ENCODE measurements at regions of chr14 and their contacts with region 1.

Region 1: GRCh38 chr14:54411371-54411770 is 14.6 kb downstream of the CDKN3 start:
- DNase-seq: no peak
- H3K4me3 ChIP-seq: no peak overlapping the region
- H3K27ac ChIP-seq: no peak overlapping the region
- H3K4me1 ChIP-seq: no peaks in the 10 kb centered on the region
- H3K27me3 ChIP-seq: no peaks in the 10 kb centered on the region
- CTCF ChIP-seq: no peak

Region 2: DNA sequence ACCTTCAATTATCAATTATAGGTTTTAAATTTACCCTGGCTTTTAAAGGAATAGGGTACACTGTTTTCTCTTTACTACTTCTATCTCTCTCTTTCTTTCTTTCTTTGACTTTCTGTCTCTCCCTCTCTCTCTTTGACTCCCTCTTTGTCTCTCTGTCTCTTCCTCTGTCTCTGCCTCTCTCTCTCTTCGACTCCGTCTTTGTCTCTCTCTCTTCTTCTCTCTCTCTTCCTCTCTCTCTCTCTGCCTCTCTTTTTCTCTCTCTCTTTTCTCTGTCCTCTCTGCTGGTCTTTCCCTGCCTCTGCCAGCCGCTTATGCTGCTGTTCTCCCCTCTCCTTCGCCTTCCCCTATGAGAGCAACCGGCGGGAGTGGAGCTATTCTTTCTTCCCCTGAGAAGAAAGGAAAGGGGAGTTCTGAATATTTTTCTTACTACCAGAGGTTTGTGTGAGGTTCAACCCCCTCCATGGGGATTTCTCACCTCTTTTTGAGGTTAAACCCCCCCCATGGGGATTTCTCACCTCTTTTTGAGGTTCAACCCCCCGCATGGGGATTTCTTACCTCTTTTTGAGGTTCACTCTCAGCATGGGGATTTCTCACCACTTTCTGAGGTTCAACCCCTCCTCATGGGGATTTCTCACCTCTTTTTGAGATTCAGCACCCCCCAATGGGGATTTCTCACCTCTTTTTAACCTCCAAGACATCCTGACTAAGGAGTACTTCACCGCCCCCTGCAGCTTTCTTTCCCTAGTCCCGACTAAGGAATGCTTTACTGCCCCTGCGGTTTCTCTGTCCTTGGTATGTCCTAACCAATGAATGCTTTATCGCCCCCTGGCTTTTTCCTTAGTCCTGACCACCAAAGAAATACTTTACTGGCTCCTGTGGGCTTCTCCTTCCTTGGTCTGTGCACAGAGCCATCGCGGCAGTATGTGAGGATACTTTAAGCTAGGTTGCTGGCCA is 1230.8 kb before region 1 on chr14:
- intact Hi-C with region 1: no loop called
- DNase-seq: no peak
- H3K4me3 ChIP-seq: no peak overlapping the region
- H3K27ac ChIP-seq: no peak overlapping the region
- H3K4me1 ChIP-seq: no peaks in the 10 kb centered on the region
- H3K27me3 ChIP-seq: no peaks in the 10 kb centered on the region
- CTCF ChIP-seq: no peak

Region 3: GRCh38 chr14:54366736-54367735 is 44.3 kb before region 1 on chr14:
- intact Hi-C with region 1: loop called (anchors 10 kb)
- DNase-seq: peak; percentile 40
- H3K4me3 ChIP-seq: no peak overlapping the region
- H3K27ac ChIP-seq: peak overlapping the region; percentile 34
- H3K4me1 ChIP-seq: no peaks in the 10 kb centered on the region
- H3K27me3 ChIP-seq: no peaks in the 10 kb centered on the region
- CTCF ChIP-seq: peak; percentile 25

Region 4: GRCh38 chr14:54472315-54472714 is 60.9 kb after region 1 on chr14:
- intact Hi-C with region 1: no loop called
- DNase-seq: no peak
- H3K4me3 ChIP-seq: no peak overlapping the region
- H3K27ac ChIP-seq: no peak overlapping the region
- H3K4me1 ChIP-seq: no peaks in the 10 kb centered on the region
- H3K27me3 ChIP-seq: no peaks in the 10 kb centered on the region
- CTCF ChIP-seq: no peak

Region 5: DNA sequence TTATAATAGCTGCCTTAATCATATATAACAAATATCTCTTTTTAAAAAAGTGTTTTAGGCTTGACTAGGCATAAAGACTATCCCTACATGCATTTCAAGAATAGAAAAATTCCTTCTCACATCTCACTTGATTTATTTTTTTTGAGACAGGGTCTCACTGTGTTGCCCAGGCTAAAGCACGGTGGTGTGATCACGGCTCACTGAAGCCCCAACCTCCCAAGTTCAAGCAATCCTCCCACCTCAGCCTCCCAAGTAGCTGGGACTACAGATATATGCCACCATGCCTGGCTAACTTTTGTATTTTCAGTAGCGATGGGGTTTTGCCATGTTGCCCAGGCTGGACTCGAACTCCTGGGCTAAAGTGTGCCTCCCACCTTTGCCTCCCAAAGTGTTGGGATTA is 556.1 kb after region 1 on chr14:
- intact Hi-C with region 1: no loop called
- DNase-seq: no peak
- H3K4me3 ChIP-seq: no peak overlapping the region
- H3K27ac ChIP-seq: no peak overlapping the region
- H3K4me1 ChIP-seq: no peaks in the 10 kb centered on the region
- H3K27me3 ChIP-seq: no peaks in the 10 kb centered on the region
- CTCF ChIP-seq: no peak

Measured in colonic mucosa (tissue), 4 donors.